ENCODE measurements at regions of chr13 and their contacts with region 1.

Region 1: GRCh38 chr13:58495668-58496067 is 864.1 kb downstream of the PCDH17 start:
- DNase-seq: no peak
- H3K4me3 ChIP-seq: no peak overlapping the region
- H3K27ac ChIP-seq: no peak overlapping the region
- H3K4me1 ChIP-seq: no peaks in the 10 kb centered on the region
- H3K27me3 ChIP-seq: no peaks in the 10 kb centered on the region
- CTCF ChIP-seq: no peak
- POLR2A ChIP-seq: no peak

Region 2: GRCh38 chr13:57969951-57970350 is 525.7 kb before region 1 on chr13:
- intact Hi-C with region 1: no loop called
- DNase-seq: no peak
- H3K4me3 ChIP-seq: no peak overlapping the region
- H3K27ac ChIP-seq: no peak overlapping the region
- H3K4me1 ChIP-seq: no peaks in the 10 kb centered on the region
- H3K27me3 ChIP-seq: no peaks in the 10 kb centered on the region
- CTCF ChIP-seq: no peak
- POLR2A ChIP-seq: no peak

Region 3: GRCh38 chr13:58452123-58452623 is 43.5 kb before region 1 on chr13:
- intact Hi-C with region 1: no loop called
- DNase-seq: no peak
- H3K4me3 ChIP-seq: no peak overlapping the region
- H3K27ac ChIP-seq: no peak overlapping the region
- H3K4me1 ChIP-seq: no peaks in the 10 kb centered on the region
- H3K27me3 ChIP-seq: no peaks in the 10 kb centered on the region
- CTCF ChIP-seq: no peak
- POLR2A ChIP-seq: no peak

Region 4: DNA sequence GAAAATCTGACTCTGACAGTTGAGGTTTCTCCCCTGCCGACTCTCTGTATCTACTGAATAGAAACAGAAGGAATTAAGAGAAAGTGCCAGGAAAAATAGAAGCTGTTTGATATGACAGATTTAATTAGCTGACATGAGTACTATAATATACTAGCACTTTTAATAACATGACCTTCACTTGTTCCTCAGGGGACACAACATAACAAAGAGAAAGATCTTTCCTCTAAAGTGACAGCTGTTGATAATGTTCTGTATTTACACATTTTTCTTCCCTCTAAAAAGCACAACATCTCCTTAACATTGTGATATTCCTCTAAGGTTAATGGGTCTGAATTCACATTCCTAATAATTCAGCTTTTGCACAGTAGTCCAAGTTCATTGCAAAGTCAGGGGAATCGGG is 271.9 kb after region 1 on chr13:
- intact Hi-C with region 1: loop called (anchors 5 kb)
- DNase-seq: no peak
- H3K4me3 ChIP-seq: no peak overlapping the region
- H3K27ac ChIP-seq: no peak overlapping the region
- H3K4me1 ChIP-seq: no peaks in the 10 kb centered on the region
- H3K27me3 ChIP-seq: no peaks in the 10 kb centered on the region
- CTCF ChIP-seq: no peak
- POLR2A ChIP-seq: no peak

Region 5: DNA sequence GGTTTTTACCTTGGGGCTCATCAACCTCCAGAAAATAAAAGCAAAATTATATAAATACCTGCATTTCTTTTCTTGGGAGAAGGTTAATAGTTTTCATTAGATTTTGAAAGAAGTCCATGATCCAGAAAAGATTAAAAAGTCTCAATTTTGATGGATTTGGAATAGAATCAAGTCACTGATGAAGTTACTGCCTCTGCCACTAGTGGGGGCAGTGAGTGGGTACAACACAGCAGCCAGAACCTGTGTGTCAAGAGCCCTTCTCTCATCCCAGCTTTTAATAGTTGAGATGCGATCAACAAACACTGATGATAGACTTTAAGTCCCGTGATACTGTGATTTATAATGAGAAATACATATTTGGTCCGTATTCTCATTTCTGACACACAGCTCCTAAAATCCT is 981.3 kb after region 1 on chr13:
- intact Hi-C with region 1: no loop called
- DNase-seq: no peak
- H3K4me3 ChIP-seq: no peak overlapping the region
- H3K27ac ChIP-seq: no peak overlapping the region
- H3K4me1 ChIP-seq: no peaks in the 10 kb centered on the region
- H3K27me3 ChIP-seq: no peaks in the 10 kb centered on the region
- CTCF ChIP-seq: no peak
- POLR2A ChIP-seq: no peak

Measured in breast epithelium (tissue), 4 donors.